Activated CD8-positive, alpha-beta memory T cell treated with anti-CD3 and anti-CD28 coated beads, Interleukin-2, amount 10 ng/mL, durations not matched to agents 7 days and 5 days (primary cell): ENCODE measurements at regions of chr22 and their contacts with region 1.

Region 1: GRCh38 chr22:46563381-46564083 is 26.1 kb upstream of the CELSR1 start:
- DNase-seq: peak; percentile 81
- ATAC-seq: peak; percentile 90
- H3K4me3 Mint-ChIP-seq: no peak overlapping the region
- H3K27ac Mint-ChIP-seq: no peak overlapping the region
- H3K4me1 Mint-ChIP-seq: peaks cover 5% of the 10 kb centered on the region
- H3K27me3 Mint-ChIP-seq: no peaks in the 10 kb centered on the region

Region 2: DNA sequence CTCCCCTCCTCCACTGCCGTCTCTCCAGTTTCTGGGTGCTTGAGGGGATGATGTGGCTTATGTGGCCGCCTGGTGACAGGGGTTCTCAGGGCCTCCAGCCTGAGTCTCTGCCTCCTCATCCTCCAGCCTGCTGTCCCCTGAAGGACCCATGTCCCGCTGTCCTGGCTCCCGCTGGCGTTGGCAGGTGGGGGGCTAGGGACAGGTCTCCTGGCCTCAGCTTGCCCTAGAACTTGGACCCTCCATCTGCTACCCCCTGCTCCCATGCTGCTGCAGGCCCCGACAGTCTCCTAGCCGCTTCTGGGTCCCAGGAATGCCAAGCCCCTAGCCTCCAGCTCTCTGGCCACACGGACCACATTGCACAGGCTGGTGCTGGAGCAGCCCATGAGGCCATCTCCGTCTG is 12.2 kb before region 1 on chr22:
- CTCF ChIA-PET with region 1: interaction called, 18 read pairs
- DNase-seq: no peak
- ATAC-seq: no peak
- H3K4me3 Mint-ChIP-seq: no peak overlapping the region
- H3K27ac Mint-ChIP-seq: no peak overlapping the region
- H3K4me1 Mint-ChIP-seq: no peaks in the 10 kb centered on the region
- H3K27me3 Mint-ChIP-seq: peaks cover 16% of the 10 kb centered on the region

Region 3: GRCh38 chr22:46613606-46614021 is 50.1 kb after region 1 on chr22:
- CTCF ChIA-PET with region 1: interaction called, 23 read pairs
- DNase-seq: no peak
- ATAC-seq: peak; percentile 12
- H3K4me3 Mint-ChIP-seq: peak overlapping the region; percentile 82
- H3K27ac Mint-ChIP-seq: peak overlapping the region; percentile 94
- H3K4me1 Mint-ChIP-seq: peaks cover 34% of the 10 kb centered on the region
- H3K27me3 Mint-ChIP-seq: no peaks in the 10 kb centered on the region

Region 4: DNA sequence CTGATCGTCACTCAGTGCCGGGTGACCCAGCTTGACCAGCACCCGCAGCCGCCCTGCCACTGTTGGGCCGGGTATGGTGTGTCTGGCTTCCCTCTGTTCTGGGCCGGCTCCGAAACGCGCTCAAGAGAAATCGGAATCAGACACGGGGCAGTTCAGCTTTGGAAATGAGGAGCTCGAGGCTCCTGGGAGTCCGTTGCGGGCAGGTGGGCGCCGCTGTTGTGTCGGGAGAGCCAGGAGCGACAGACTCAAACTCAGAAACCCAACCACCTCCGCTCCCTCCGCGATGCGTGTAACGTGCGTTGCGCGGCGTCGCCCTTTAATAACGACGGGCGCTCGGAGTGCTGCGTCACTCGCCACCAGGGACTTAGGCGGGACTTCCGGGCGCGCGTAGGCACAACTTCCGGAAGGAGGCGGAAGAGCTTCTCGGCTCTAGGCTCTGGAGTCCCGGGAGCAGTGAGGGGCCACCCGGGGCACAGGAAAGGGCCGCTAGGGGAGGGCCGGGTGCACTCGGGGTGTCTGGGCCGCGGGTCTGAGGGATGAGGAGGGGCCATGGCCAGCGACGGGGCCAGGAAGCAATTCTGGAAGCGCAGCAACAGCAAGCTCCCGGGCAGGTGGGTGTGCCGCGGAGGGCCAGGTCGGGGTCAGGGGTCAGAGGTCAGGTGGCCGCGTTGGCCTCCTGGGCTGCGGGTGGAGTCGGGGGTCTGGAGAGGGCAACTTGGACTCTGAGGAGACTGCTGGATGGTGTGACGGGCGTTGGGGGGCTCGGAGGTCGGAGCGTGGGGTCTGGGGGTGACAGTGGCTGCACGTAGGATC is 198.9 kb after region 1 on chr22 and contains the start of gene TBC1D22A:
- CTCF ChIA-PET with region 1: interaction called, 14 read pairs
- DNase-seq: peak; percentile 96
- ATAC-seq: peak; percentile 95
- H3K4me3 Mint-ChIP-seq: peak within 1 kb of the TSS; percentile 96
- H3K27ac Mint-ChIP-seq: peak within 1 kb of the TSS; percentile 99
- H3K4me1 Mint-ChIP-seq: peaks cover 52% of the 10 kb centered on the region
- H3K27me3 Mint-ChIP-seq: no peaks in the 10 kb centered on the region
- total RNA-seq, gene TBC1D22A: 32.6 to 44.9 TPM